Adrenal gland (tissue), 19 donors: ENCODE measurements at regions of chr2 and their contacts with region 1.

Region 1: GRCh38 chr2:161946489-161947107 is 127.4 kb downstream of the DPP4 start:
- DNase-seq: no peak
- H3K4me3 ChIP-seq: no peak overlapping the region
- H3K27ac ChIP-seq: no peak overlapping the region
- H3K4me1 ChIP-seq: no peaks in the 10 kb centered on the region
- H3K27me3 ChIP-seq: no peaks in the 10 kb centered on the region
- CTCF ChIP-seq: peak in 5 of 6 experiments; percentile 42 to 57 (median 46)
- POLR2A ChIP-seq: no peak

Region 2: DNA sequence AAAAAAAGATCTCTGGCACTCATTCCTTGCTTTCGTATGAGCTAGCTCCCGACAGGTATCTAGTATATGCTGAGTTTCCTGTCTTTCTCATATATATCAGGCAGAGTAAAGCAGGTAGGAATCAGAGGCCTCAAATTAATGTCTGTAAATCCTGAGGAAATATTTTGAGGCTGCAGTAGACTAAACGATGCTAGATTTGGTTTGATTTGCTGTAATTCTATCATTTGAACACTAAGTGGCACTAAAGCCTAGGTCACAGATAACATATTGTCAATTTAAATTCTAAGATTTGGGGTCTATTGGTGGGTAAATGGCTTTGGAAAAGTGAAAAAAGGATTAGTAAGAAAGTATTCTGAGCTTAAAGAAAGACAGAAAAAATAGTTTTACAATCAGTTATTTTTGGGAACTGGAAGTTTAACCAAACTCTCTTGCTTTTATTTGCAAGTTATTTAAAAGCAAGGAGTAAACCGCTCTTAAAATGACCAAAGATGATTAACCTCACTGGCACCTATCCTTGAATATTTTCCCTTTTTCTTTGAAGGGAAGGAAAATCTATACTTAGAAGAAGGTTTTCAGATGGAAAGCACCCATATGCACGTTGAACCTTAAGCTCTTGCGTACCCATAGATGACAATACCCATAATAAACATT is 360.0 kb before region 1 on chr2:
- intact Hi-C with region 1: loop called (anchors 5 to 10 kb)
- DNase-seq: no peak
- H3K4me3 ChIP-seq: no peak overlapping the region
- H3K27ac ChIP-seq: no peak overlapping the region
- H3K4me1 ChIP-seq: no peaks in the 10 kb centered on the region
- H3K27me3 ChIP-seq: no peaks in the 10 kb centered on the region
- CTCF ChIP-seq: peak; percentile 32 to 71 (median 61)
- POLR2A ChIP-seq: no peak

Region 3: DNA sequence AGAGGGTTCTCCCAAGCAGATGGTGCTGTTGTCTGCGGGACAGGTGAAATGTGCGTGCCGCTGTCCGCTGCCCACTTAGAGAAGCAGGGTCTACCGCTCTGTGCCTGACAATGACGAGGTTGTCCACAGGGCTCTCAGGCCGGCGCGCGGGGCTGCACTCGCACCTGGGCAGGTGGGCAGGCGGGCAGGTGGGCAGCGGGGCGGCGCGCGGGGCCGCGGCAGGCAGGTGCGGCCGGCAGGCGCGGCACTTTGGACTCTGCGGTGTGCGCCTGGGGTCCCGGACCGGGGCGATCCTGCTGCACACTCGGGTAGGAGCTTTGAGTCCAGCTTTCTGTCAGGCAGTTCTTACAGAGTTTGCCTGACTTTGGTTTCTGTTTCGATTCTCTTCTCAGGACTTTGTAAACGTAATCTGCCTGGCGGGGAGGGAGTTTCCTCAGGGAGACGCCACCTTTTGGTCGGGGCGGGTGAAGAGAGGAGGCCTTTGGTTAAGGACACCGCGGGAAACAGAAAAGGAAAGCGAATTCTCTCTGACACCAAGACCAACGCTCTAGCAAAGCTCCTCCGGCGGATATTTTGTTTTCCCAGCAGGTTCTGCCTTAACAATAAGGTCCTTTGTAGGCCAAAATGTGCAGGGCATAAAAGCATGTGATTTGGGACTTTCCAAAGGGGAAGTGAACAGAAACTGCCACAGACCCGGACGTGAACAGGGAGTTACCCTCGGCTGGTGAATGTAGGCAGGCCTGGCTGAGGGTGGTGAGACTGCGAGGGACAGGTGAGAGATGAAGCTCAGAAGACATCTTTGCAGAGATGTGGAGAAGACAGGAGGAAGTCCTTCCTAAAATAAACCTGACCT is 372.0 kb after region 1 on chr2 and contains the start of gene IFIH1:
- intact Hi-C with region 1: no loop called
- DNase-seq: peak; percentile 85 to 95 (median 91)
- H3K4me3 ChIP-seq: peak within 1 kb of the TSS; percentile 67 to 96 (median 81)
- H3K27ac ChIP-seq: peak within 1 kb of the TSS; percentile 66 to 93 (median 87)
- H3K4me1 ChIP-seq: peaks cover 19 to 43% of the 10 kb centered on the region in 2 donors
- H3K27me3 ChIP-seq: no peaks in the 10 kb centered on the region
- CTCF ChIP-seq: peak in 3 of 6 experiments; percentile 10 to 18 (median 14)
- POLR2A ChIP-seq: peak in 1 of 2 donors; percentile 70
- total RNA-seq, gene IFIH1: 9.7 to 21.8 (median 15.6) TPM

Region 4: DNA sequence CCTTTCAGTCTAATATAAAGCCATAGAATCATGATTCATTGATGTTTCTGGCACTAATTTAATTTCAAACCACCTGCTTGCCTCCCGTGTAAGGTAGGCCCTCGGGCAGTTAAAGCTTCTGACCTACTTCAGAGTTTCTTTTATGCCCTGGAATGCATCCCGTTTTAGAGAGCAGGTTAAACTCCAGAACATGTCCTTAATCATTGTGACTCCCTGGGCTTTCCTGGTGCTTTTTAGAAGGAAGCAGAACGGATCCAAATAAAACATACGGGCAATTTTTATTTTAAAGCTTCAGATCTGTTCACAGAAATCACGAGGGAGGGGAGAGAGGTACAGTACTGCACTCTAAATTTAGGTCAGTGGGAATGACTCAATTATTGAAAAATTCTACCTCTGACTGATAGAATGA is 532.1 kb after region 1 on chr2:
- intact Hi-C with region 1: no loop called
- DNase-seq: no peak
- H3K4me3 ChIP-seq: no peak overlapping the region
- H3K27ac ChIP-seq: peak overlapping the region in 1 of 5 donors; percentile 2
- H3K4me1 ChIP-seq: no peaks in the 10 kb centered on the region
- H3K27me3 ChIP-seq: no peaks in the 10 kb centered on the region
- CTCF ChIP-seq: no peak
- POLR2A ChIP-seq: no peak